ENCODE measurements at regions of chr4 and their contacts with region 1.

Region 1: DNA sequence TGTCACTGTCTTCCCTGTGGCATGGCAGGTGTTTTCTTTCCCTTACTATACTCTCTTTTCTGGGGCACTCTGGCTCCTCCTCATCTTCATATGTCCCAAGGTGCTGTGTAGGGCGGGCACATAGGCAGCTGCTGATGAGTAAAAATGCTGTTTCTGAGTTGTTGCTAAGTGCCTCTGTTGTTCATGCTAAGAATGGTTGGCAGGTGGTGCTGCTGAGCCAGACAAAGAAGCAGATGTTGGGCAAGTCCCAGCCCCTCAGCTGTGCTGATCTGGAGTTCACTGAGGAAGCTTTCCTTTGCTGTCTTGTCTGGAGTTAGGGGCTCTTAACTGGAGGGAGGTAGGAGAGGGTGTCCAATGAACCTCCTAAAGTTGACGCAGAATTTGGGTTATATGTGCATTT is 40.6 kb downstream of the HADH start:
- DNase-seq: peak; percentile 93
- H3K4me3 Mint-ChIP-seq: peak overlapping the region; percentile 71
- H3K27ac Mint-ChIP-seq: peak overlapping the region; percentile 91
- H3K4me1 Mint-ChIP-seq: peaks cover 60% of the 10 kb centered on the region
- H3K27me3 Mint-ChIP-seq: no peaks in the 10 kb centered on the region

Region 2: GRCh38 chr4:108109997-108110416 is 79.7 kb after region 1 on chr4:
- intact Hi-C with region 1: loop called (anchors 1 kb)
- DNase-seq: peak; percentile 57
- H3K4me3 Mint-ChIP-seq: peak overlapping the region; percentile 81
- H3K27ac Mint-ChIP-seq: peak overlapping the region; percentile 90
- H3K4me1 Mint-ChIP-seq: peaks cover 84% of the 10 kb centered on the region
- H3K27me3 Mint-ChIP-seq: no peaks in the 10 kb centered on the region

Region 3: DNA sequence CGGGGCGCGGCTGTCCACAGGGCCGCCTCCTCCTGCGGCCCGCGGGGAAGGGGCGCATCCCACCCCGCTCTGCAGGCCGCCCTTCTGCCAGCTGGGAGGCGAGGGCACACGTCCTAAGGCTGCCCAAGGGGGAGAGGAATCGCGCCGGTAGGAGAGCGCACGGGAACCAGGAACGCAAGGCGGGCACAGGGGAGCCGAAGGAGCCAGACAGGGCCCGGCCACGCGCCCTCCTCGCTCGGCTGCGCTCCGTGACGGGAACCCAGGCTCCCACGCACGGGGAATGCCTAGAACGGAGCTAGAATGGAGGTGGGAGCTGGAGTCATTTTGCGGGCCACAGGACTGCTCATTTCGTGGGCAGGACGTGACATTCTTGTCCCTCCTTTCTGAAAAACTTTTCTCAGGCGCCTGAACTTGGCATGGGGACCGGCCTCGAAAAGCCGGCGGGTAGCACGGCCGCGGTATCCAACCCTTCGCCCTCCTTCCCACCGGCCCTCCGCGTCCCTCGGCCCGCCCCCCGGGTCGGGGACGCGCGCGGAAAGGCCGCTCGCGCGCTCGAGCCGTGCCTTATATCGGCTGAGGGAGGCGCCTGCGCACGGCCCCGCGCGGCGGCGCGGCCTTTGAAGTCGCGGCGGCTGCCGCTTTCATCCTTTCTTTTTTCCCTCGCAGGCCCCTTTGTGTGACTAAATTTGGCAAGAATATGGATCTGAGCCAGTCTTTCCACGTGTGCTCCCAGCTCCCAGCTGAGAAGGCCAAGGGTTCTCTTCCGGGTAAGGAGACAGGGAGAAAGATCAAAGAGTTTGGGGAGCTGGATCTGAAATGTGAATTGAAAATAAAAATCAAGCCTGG is 142.6 kb after region 1 on chr4:
- intact Hi-C with region 1: loop called (anchors 1 kb)
- DNase-seq: peak; percentile 93
- H3K4me3 Mint-ChIP-seq: peak overlapping the region; percentile 97
- H3K27ac Mint-ChIP-seq: peak overlapping the region; percentile 93
- H3K4me1 Mint-ChIP-seq: peaks cover 53% of the 10 kb centered on the region
- H3K27me3 Mint-ChIP-seq: peaks cover 14% of the 10 kb centered on the region

Region 4: GRCh38 chr4:108425988-108426387 is 395.7 kb after region 1 on chr4:
- intact Hi-C with region 1: loop called (anchors 2 kb)
- DNase-seq: no peak
- H3K4me3 Mint-ChIP-seq: no peak overlapping the region
- H3K27ac Mint-ChIP-seq: no peak overlapping the region
- H3K4me1 Mint-ChIP-seq: peaks cover 20% of the 10 kb centered on the region
- H3K27me3 Mint-ChIP-seq: peaks cover 19% of the 10 kb centered on the region

Region 5: GRCh38 chr4:108512615-108513505 is 482.5 kb after region 1 on chr4:
- intact Hi-C with region 1: loop called (anchors 5 kb)
- DNase-seq: peak; percentile 80
- H3K4me3 Mint-ChIP-seq: peak overlapping the region; percentile 53
- H3K27ac Mint-ChIP-seq: no peak overlapping the region
- H3K4me1 Mint-ChIP-seq: peaks cover 16% of the 10 kb centered on the region
- H3K27me3 Mint-ChIP-seq: peaks cover 4% of the 10 kb centered on the region

Region 6: GRCh38 chr4:108620101-108620932 is 590.0 kb after region 1 on chr4 and contains the start of gene RPL34:
- intact Hi-C with region 1: loop called (anchors 2 kb)
- DNase-seq: peak; percentile 99
- H3K4me3 Mint-ChIP-seq: peak within 1 kb of the TSS; percentile 93
- H3K27ac Mint-ChIP-seq: peak within 1 kb of the TSS; percentile 96
- H3K4me1 Mint-ChIP-seq: peaks cover 40% of the 10 kb centered on the region
- H3K27me3 Mint-ChIP-seq: no peaks in the 10 kb centered on the region
- total RNA-seq, gene RPL34: 1,411 and 1,425 TPM in 2 replicates